ENCODE measurements at regions of chr15 and their contacts with region 1.

Region 1: GRCh38 chr15:50083424-50084025 is 35.5 kb downstream of the ATP8B4 start:
- DNase-seq: no peak
- H3K4me3 ChIP-seq: no peak overlapping the region
- H3K27ac ChIP-seq: no peak overlapping the region
- H3K27me3 ChIP-seq: no peaks in the 10 kb centered on the region
- CTCF ChIP-seq: no peak

Region 2: GRCh38 chr15:50030456-50030855 is 53.1 kb before region 1 on chr15:
- CTCF ChIA-PET with region 1: no interaction called
- POLR2A ChIA-PET with region 1: no interaction called
- DNase-seq: no peak
- H3K4me3 ChIP-seq: no peak overlapping the region
- H3K27ac ChIP-seq: no peak overlapping the region
- H3K27me3 ChIP-seq: no peaks in the 10 kb centered on the region
- CTCF ChIP-seq: no peak

Region 3: DNA sequence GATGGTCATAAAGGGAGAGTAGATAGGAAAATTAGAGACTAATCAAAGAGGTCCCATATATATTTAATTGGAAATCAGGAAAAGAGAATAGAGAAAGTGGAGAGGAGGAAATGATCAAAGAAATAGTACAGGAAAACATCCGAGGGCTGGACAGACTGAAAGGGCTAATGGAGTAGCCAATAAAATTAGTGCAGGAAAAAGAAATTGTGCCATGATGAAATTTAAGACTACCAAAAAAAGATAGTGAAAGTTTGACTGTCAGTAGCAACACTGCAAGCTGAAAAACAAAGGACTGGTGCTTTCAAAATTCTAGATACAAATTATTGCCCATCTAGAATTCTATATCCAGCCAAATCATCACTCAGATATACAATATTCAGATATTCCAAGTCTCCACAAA is 134.8 kb after region 1 on chr15:
- CTCF ChIA-PET with region 1: no interaction called
- POLR2A ChIA-PET with region 1: interaction called, 11 read pairs
- DNase-seq: no peak
- H3K4me3 ChIP-seq: no peak overlapping the region
- H3K27ac ChIP-seq: no peak overlapping the region
- H3K27me3 ChIP-seq: peaks cover 6% of the 10 kb centered on the region
- CTCF ChIP-seq: no peak

Region 4: GRCh38 chr15:50484781-50485180 is 401.3 kb after region 1 on chr15:
- CTCF ChIA-PET with region 1: no interaction called
- POLR2A ChIA-PET with region 1: no interaction called
- DNase-seq: no peak
- H3K4me3 ChIP-seq: no peak overlapping the region
- H3K27ac ChIP-seq: no peak overlapping the region
- H3K27me3 ChIP-seq: no peaks in the 10 kb centered on the region
- CTCF ChIP-seq: no peak